Activated B cell treated with CpG ODN at 0.5 μM for 24 hours (primary cell): ENCODE measurements at regions of chr7 and their contacts with region 1.

Region 1: GRCh38 chr7:41940760-41941343 is 238.0 kb upstream of the INHBA start:
- DNase-seq: peak; percentile 35
- ATAC-seq: peak; percentile 67
- H3K4me3 Mint-ChIP-seq: peak overlapping the region; percentile 51
- H3K27ac Mint-ChIP-seq: no peak overlapping the region
- H3K4me1 Mint-ChIP-seq: peaks cover 27% of the 10 kb centered on the region
- H3K27me3 Mint-ChIP-seq: peaks cover 5% of the 10 kb centered on the region
- CTCF ChIP-seq: no peak

Region 2: GRCh38 chr7:41809940-41810576 is 130.8 kb before region 1 on chr7:
- CTCF ChIA-PET with region 1: no interaction called
- POLR2A ChIA-PET with region 1: no interaction called
- intact Hi-C with region 1: no loop called
- DNase-seq: no peak
- ATAC-seq: peak; percentile 66
- H3K4me3 Mint-ChIP-seq: no peak overlapping the region
- H3K27ac Mint-ChIP-seq: no peak overlapping the region
- H3K4me1 Mint-ChIP-seq: peaks cover 19% of the 10 kb centered on the region
- H3K27me3 Mint-ChIP-seq: no peaks in the 10 kb centered on the region
- CTCF ChIP-seq: no peak

Region 3: GRCh38 chr7:41881331-41882130 is 59.3 kb before region 1 on chr7:
- CTCF ChIA-PET with region 1: interaction called, 19 read pairs
- POLR2A ChIA-PET with region 1: no interaction called
- intact Hi-C with region 1: loop called (anchors 1 kb)
- DNase-seq: peak; percentile 75
- ATAC-seq: peak; percentile 88
- H3K4me3 Mint-ChIP-seq: peak overlapping the region; percentile 80
- H3K27ac Mint-ChIP-seq: peak overlapping the region; percentile 91
- H3K4me1 Mint-ChIP-seq: peaks cover 76% of the 10 kb centered on the region
- H3K27me3 Mint-ChIP-seq: no peaks in the 10 kb centered on the region
- CTCF ChIP-seq: no peak

Region 4: GRCh38 chr7:41930538-41931262 is 10.2 kb before region 1 on chr7:
- CTCF ChIA-PET with region 1: interaction called, 16 read pairs
- POLR2A ChIA-PET with region 1: no interaction called
- intact Hi-C with region 1: no loop called
- DNase-seq: no peak
- ATAC-seq: no peak
- H3K4me3 Mint-ChIP-seq: no peak overlapping the region
- H3K27ac Mint-ChIP-seq: no peak overlapping the region
- H3K4me1 Mint-ChIP-seq: peaks cover 19% of the 10 kb centered on the region
- H3K27me3 Mint-ChIP-seq: no peaks in the 10 kb centered on the region
- CTCF ChIP-seq: no peak

Region 5: DNA sequence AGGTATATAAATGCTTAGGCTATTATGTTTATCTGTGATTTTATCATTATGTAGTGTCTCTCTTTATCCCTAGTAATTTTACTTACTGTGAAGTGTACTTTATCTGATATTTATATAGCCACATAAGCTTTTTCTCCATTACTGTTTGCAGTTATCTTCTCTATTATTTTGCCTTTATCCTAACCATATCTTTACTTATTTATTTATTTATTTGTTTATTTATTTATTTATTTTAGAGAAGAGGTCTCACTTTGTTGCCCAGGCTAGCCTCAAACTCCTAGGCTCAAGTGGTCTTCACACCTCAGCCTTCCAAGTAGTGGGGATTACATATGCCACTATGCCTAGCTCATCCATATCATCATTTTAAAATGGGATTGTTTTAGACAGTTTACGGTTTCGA is 639.2 kb after region 1 on chr7:
- CTCF ChIA-PET with region 1: no interaction called
- POLR2A ChIA-PET with region 1: no interaction called
- intact Hi-C with region 1: no loop called
- DNase-seq: no peak
- ATAC-seq: no peak
- H3K4me3 Mint-ChIP-seq: no peak overlapping the region
- H3K27ac Mint-ChIP-seq: no peak overlapping the region
- H3K4me1 Mint-ChIP-seq: no peaks in the 10 kb centered on the region
- H3K27me3 Mint-ChIP-seq: no peaks in the 10 kb centered on the region
- CTCF ChIP-seq: no peak

Region 6: GRCh38 chr7:42876182-42877068 is 935.6 kb after region 1 on chr7:
- CTCF ChIA-PET with region 1: interaction called, 7 read pairs
- POLR2A ChIA-PET with region 1: no interaction called
- intact Hi-C with region 1: loop called (anchors 1 kb)
- DNase-seq: no peak
- ATAC-seq: peak; percentile 87
- H3K4me3 Mint-ChIP-seq: no peak overlapping the region
- H3K27ac Mint-ChIP-seq: no peak overlapping the region
- H3K4me1 Mint-ChIP-seq: peaks cover 5% of the 10 kb centered on the region
- H3K27me3 Mint-ChIP-seq: no peaks in the 10 kb centered on the region
- CTCF ChIP-seq: peak; percentile 54

Region 7: GRCh38 chr7:43439631-43440401 is 1499.0 kb after region 1 on chr7:
- CTCF ChIA-PET with region 1: no interaction called
- POLR2A ChIA-PET with region 1: no interaction called
- intact Hi-C with region 1: loop called (anchors 1 kb)
- DNase-seq: no peak
- ATAC-seq: no peak
- H3K4me3 Mint-ChIP-seq: no peak overlapping the region
- H3K27ac Mint-ChIP-seq: no peak overlapping the region
- H3K4me1 Mint-ChIP-seq: no peaks in the 10 kb centered on the region
- H3K27me3 Mint-ChIP-seq: peaks cover 4% of the 10 kb centered on the region
- CTCF ChIP-seq: peak; percentile 29